ENCODE measurements at regions of chr14 and their contacts with region 1.

Region 1: DNA sequence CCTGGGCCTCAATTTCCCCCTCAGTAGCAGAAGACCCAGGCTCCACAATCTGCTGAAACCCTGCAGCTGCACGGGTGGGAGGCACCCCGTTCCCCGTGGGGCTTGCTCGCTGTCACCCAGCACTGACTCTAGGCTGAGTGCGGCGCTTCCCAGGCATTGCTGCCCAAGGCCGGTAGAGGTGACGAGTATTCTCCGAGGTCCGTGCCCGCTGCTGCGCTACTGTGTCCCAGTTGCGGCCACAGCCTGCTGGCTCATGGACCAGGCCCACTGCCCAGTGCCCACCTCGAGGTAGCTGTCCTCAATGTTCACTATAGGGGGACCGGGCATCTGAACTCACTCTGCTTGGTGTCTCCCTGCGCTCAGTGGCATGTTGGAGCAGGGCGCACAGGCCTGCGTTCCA is 74.7 kb downstream of the GSC start:
- DNase-seq: no peak
- H3K4me3 Mint-ChIP-seq: no peak overlapping the region
- H3K27ac Mint-ChIP-seq: no peak overlapping the region
- H3K4me1 Mint-ChIP-seq: no peaks in the 10 kb centered on the region
- H3K27me3 Mint-ChIP-seq: peaks cover 27% of the 10 kb centered on the region
- CTCF ChIP-seq: no peak

Region 2: DNA sequence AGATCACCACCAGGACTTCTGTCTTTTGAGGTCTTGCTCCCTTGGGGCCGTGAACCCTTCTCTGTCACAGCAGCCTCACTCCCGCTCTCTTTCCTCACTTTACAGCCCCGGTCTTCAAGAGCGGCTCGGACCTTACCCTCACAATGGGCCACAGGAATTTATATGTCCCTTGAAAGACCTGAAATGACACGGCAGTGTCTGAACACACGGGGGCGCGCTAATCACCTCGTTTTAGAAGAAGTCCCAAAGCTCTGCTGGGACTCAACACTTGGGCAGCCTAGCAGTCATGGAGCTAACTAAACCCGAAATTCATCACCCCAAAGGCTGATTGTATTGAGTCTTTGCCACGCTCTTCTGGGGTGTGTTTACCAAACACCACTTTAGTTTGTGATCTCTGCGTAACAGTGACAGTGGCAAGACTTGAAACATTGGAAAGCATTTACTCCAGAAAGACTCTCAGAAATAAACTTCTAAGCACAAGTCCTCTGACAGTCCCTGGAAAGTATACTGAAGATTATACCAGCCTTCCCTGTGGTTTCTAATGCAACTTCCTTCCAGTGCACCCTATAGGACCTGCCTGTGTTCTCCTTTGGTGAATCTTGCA is 271.7 kb before region 1 on chr14:
- CTCF ChIA-PET with region 1: no interaction called
- intact Hi-C with region 1: no loop called
- DNase-seq: peak; percentile 81
- H3K4me3 Mint-ChIP-seq: peak overlapping the region; percentile 32
- H3K27ac Mint-ChIP-seq: no peak overlapping the region
- H3K4me1 Mint-ChIP-seq: peaks cover 8% of the 10 kb centered on the region
- H3K27me3 Mint-ChIP-seq: no peaks in the 10 kb centered on the region
- CTCF ChIP-seq: peak; percentile 56

Region 3: GRCh38 chr14:95431199-95432143 is 736.2 kb after region 1 on chr14:
- CTCF ChIA-PET with region 1: no interaction called
- intact Hi-C with region 1: loop called (anchors 2 kb)
- DNase-seq: peak; percentile 31
- H3K4me3 Mint-ChIP-seq: no peak overlapping the region
- H3K27ac Mint-ChIP-seq: no peak overlapping the region
- H3K4me1 Mint-ChIP-seq: peaks cover 9% of the 10 kb centered on the region
- H3K27me3 Mint-ChIP-seq: no peaks in the 10 kb centered on the region
- CTCF ChIP-seq: peak; percentile 37